Naive thymus-derived CD4-positive, alpha-beta T cell (primary cell): ENCODE measurements at regions of chr17 and their contacts with region 1.

Region 1: GRCh38 chr17:43170766-43171585 is at the start of gene NBR1:
- DNase-seq: peak; percentile 78 to 98 (median 97)
- ATAC-seq: peak; percentile 85
- H3K4me3 ChIP-seq: peak within 1 kb of the TSS; percentile 64
- H3K4me3 Mint-ChIP-seq: no peak within 1 kb of the TSS
- H3K27ac ChIP-seq: peak within 1 kb of the TSS; percentile 97
- H3K27ac Mint-ChIP-seq: no peak within 1 kb of the TSS
- H3K4me1 ChIP-seq: peaks cover 30 to 33% of the 10 kb centered on the region in 2 donors
- H3K4me1 Mint-ChIP-seq: peaks cover 21 to 46% (median 32%) of the 10 kb centered on the region in 7 donors
- H3K27me3 ChIP-seq: no peaks in the 10 kb centered on the region
- H3K27me3 Mint-ChIP-seq: no peaks in the 10 kb centered on the region
- total RNA-seq, gene NBR1: 44.6 to 83.0 (median 64.3) TPM

Region 2: DNA sequence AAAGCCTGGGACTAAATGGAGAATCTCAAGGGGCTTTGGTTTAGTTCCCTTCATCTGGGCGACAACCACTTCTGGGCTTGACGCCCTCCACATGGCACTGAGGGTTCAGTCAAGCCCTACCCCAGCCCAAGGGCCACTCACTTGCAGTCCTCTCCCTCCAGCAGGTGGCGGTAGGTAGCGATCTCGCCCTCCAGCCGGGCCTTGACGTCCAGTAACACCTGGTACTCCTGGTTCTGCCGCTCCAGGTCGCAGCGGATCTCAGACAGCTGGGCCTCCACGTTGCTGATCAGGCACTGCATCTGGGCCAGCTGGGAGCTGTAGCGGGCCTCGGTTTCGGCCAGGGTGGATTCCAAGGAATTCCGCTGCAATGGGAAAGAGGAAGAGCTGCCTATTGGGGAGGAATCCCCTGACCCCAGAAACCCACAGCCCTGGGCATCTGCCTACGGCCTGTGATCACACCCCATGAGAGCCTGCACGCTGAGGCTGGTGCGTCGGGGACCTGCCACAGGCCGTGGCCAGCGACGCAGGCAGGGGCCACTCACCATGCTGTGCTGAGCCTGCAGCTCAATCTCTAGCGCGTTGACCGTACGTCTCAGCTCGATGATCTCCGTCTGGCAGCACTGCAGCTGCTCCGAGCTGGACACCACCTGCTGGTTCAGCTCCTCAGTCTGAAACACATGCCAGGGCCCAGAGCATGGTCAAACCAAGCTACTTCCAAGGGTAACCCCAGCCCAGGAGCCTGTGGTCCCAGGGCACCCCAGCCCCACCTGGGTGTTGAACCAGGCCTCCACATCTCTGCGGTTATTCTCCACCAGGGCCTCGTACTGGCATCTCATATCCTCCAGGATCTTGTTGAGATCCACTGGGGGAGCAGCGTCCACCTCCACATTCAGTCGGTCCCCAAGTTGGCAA is 1683.9 kb before region 1 on chr17:
- CTCF ChIA-PET with region 1: no interaction called
- POLR2A ChIA-PET with region 1: no interaction called
- intact Hi-C with region 1: no loop called
- DNase-seq: peak in 1 of 9 donors; percentile 58
- ATAC-seq: no peak
- H3K4me3 ChIP-seq: no peak overlapping the region
- H3K4me3 Mint-ChIP-seq: no peak overlapping the region
- H3K27ac ChIP-seq: no peak overlapping the region
- H3K27ac Mint-ChIP-seq: no peak overlapping the region
- H3K4me1 ChIP-seq: peaks cover 5% of the 10 kb centered on the region in 2 donors
- H3K4me1 Mint-ChIP-seq: peaks cover 0 to 12% (median 11%) of the 10 kb centered on the region in 7 donors
- H3K27me3 ChIP-seq: no peaks in the 10 kb centered on the region
- H3K27me3 Mint-ChIP-seq: peaks cover 0 to 2% (median 0%) of the 10 kb centered on the region in 5 donors

Region 3: GRCh38 chr17:42819944-42820535 is 350.9 kb before region 1 on chr17:
- CTCF ChIA-PET with region 1: no interaction called
- POLR2A ChIA-PET with region 1: no interaction called
- intact Hi-C with region 1: loop called in 1 of 2 experiments (anchors 1 kb)
- DNase-seq: peak; percentile 16 to 57 (median 34)
- ATAC-seq: no peak
- H3K4me3 ChIP-seq: no peak overlapping the region
- H3K4me3 Mint-ChIP-seq: peak overlapping the region in 2 of 10 donors; percentile 1 to 22
- H3K27ac ChIP-seq: peak overlapping the region; percentile 40
- H3K27ac Mint-ChIP-seq: peak overlapping the region in 4 of 9 donors; percentile 6 to 43 (median 27)
- H3K4me1 ChIP-seq: peaks cover 6 to 12% of the 10 kb centered on the region in 2 donors
- H3K4me1 Mint-ChIP-seq: peaks cover 19 to 42% (median 28%) of the 10 kb centered on the region in 7 donors
- H3K27me3 ChIP-seq: no peaks in the 10 kb centered on the region
- H3K27me3 Mint-ChIP-seq: no peaks in the 10 kb centered on the region

Region 4: DNA sequence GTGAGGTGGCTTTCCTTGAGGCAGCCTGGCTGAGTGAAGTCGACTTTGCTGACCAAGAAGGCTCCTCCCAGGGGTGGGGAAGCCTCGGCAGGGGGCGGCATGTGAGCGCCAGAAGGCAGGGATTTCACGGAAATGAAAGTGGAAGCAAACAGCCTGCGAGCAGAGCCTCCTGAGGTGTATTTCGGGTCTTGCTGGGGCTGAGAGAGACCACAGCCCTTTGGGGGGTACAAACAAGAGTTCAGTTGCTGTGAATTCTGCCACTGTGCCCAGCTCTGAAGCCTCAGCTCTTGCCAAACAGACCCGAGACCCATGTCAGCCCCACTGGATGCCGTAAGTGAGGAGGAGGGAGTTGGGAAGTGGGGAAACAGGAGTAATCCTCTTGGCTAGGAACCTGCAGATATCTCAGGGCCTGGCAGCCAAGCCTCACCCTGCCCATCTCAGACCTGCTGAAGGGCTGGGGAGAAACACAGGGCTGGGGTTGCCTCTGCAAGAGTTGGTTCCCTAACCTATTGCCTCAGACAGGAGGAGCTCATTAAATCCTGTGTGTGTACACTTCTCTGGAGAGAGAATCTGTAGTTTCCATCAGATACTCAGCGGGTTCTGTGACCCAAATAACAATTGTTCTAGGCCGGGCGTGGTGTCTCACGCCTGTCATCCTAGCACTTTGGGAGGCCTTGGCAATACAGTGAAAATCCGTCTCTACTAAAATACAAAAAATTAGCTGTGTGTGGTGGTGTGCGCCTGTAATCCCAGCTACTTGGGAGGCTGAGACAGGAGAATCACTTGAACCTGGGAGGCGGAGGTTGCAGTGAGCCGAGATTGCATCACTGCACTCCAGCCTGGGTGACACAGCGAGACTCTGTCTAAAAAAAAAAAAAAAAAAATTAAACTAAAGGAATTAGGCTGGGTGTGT is 164.1 kb before region 1 on chr17 and contains the start of gene IFI35:
- CTCF ChIA-PET with region 1: interaction called, 7 read pairs
- POLR2A ChIA-PET with region 1: interaction called, 4 read pairs
- intact Hi-C with region 1: loop called (anchors 1 to 2 kb)
- DNase-seq: peak; percentile 63 to 85 (median 82)
- ATAC-seq: peak; percentile 99
- H3K4me3 ChIP-seq: peak within 1 kb of the TSS; percentile 97
- H3K4me3 Mint-ChIP-seq: peak within 1 kb of the TSS; percentile 86 to 100 (median 100)
- H3K27ac ChIP-seq: peak within 1 kb of the TSS; percentile 99
- H3K27ac Mint-ChIP-seq: peak within 1 kb of the TSS; percentile 94 to 100 (median 100)
- H3K4me1 ChIP-seq: no peaks in the 10 kb centered on the region
- H3K4me1 Mint-ChIP-seq: peaks cover 6 to 25% (median 24%) of the 10 kb centered on the region in 7 donors
- H3K27me3 ChIP-seq: no peaks in the 10 kb centered on the region
- H3K27me3 Mint-ChIP-seq: no peaks in the 10 kb centered on the region
- total RNA-seq, gene IFI35: 23.5 to 145 (median 32.1) TPM

Region 5: DNA sequence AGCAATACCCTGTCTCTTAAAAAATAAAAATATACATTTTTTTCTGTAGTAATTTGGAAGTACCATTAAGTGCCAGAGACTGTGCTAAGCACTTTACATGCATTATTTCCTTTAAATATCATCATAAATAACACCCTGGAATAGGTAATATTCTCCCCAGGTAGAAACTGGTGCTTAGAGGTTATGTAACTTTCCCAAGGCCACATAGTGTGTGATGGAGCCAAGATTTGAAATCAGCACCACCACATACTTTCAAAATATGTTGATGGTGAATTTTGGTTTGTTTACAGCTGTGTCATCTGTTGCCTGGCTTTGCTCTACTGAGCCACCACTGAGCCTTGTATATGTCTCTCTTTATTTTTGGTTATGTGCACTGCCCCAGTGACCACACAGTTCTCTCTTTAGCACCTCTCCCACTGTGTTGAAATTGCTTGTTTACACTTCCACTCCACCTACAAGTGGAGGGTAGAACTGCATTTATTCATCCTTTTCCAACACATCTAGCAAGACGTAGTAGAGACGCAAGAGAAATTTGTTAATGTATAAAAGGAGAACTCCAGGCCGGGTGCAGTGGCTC is 19.0 kb before region 1 on chr17:
- CTCF ChIA-PET with region 1: no interaction called
- POLR2A ChIA-PET with region 1: no interaction called
- intact Hi-C with region 1: no loop called
- DNase-seq: no peak
- ATAC-seq: no peak
- H3K4me3 ChIP-seq: no peak overlapping the region
- H3K4me3 Mint-ChIP-seq: no peak overlapping the region
- H3K27ac ChIP-seq: no peak overlapping the region
- H3K27ac Mint-ChIP-seq: no peak overlapping the region
- H3K4me1 ChIP-seq: no peaks in the 10 kb centered on the region
- H3K4me1 Mint-ChIP-seq: no peaks in the 10 kb centered on the region
- H3K27me3 ChIP-seq: no peaks in the 10 kb centered on the region
- H3K27me3 Mint-ChIP-seq: no peaks in the 10 kb centered on the region

Region 6: GRCh38 chr17:43183921-43184320 is 12.9 kb after region 1 on chr17:
- CTCF ChIA-PET with region 1: interaction called, 7 read pairs
- POLR2A ChIA-PET with region 1: interaction called, 14 read pairs
- intact Hi-C with region 1: no loop called
- DNase-seq: no peak
- ATAC-seq: no peak
- H3K4me3 ChIP-seq: no peak overlapping the region
- H3K4me3 Mint-ChIP-seq: peak overlapping the region in 1 of 10 donors; percentile 7
- H3K27ac ChIP-seq: no peak overlapping the region
- H3K27ac Mint-ChIP-seq: peak overlapping the region in 1 of 9 donors; percentile 9
- H3K4me1 ChIP-seq: no peaks in the 10 kb centered on the region
- H3K4me1 Mint-ChIP-seq: peaks cover 0 to 5% (median 0%) of the 10 kb centered on the region in 7 donors
- H3K27me3 ChIP-seq: no peaks in the 10 kb centered on the region
- H3K27me3 Mint-ChIP-seq: no peaks in the 10 kb centered on the region

Region 7: GRCh38 chr17:43330876-43331639 is 160.1 kb after region 1 on chr17:
- CTCF ChIA-PET with region 1: interaction called, 5 read pairs
- POLR2A ChIA-PET with region 1: interaction called, 6 read pairs
- intact Hi-C with region 1: loop called in 1 of 2 experiments (anchors 1 kb)
- DNase-seq: no peak
- ATAC-seq: no peak
- H3K4me3 ChIP-seq: no peak overlapping the region
- H3K4me3 Mint-ChIP-seq: no peak overlapping the region
- H3K27ac ChIP-seq: no peak overlapping the region
- H3K27ac Mint-ChIP-seq: peak overlapping the region in 1 of 9 donors; percentile 41
- H3K4me1 ChIP-seq: peaks cover 4 to 5% of the 10 kb centered on the region in 2 donors
- H3K4me1 Mint-ChIP-seq: peaks cover 7 to 12% (median 9%) of the 10 kb centered on the region in 7 donors
- H3K27me3 ChIP-seq: no peaks in the 10 kb centered on the region
- H3K27me3 Mint-ChIP-seq: peaks cover 0 to 30% (median 16%) of the 10 kb centered on the region in 5 donors

Region 8: GRCh38 chr17:43388359-43389045 is 217.5 kb after region 1 on chr17:
- CTCF ChIA-PET with region 1: no interaction called
- POLR2A ChIA-PET with region 1: interaction called, 3 read pairs
- intact Hi-C with region 1: loop called in 1 of 2 experiments (anchors 1 kb)
- DNase-seq: peak; percentile 92 to 98 (median 95)
- ATAC-seq: peak; percentile 84
- H3K4me3 ChIP-seq: peak overlapping the region; percentile 94
- H3K4me3 Mint-ChIP-seq: peak overlapping the region; percentile 91 to 99 (median 96)
- H3K27ac ChIP-seq: peak overlapping the region; percentile 95
- H3K27ac Mint-ChIP-seq: peak overlapping the region; percentile 95 to 100 (median 98)
- H3K4me1 ChIP-seq: peaks cover 4 to 15% of the 10 kb centered on the region in 2 donors
- H3K4me1 Mint-ChIP-seq: peaks cover 16 to 39% (median 31%) of the 10 kb centered on the region in 7 donors
- H3K27me3 ChIP-seq: no peaks in the 10 kb centered on the region
- H3K27me3 Mint-ChIP-seq: no peaks in the 10 kb centered on the region

Region 9: GRCh38 chr17:43645765-43646481 is 474.9 kb after region 1 on chr17:
- CTCF ChIA-PET with region 1: no interaction called
- POLR2A ChIA-PET with region 1: no interaction called
- intact Hi-C with region 1: no loop called
- DNase-seq: peak in 3 of 9 donors; percentile 11 to 30 (median 18)
- ATAC-seq: peak; percentile 72
- H3K4me3 ChIP-seq: no peak overlapping the region
- H3K4me3 Mint-ChIP-seq: peak overlapping the region in 9 of 10 donors; percentile 27 to 76 (median 69)
- H3K27ac ChIP-seq: peak overlapping the region; percentile 30
- H3K27ac Mint-ChIP-seq: peak overlapping the region in 1 of 9 donors; percentile 8
- H3K4me1 ChIP-seq: no peaks in the 10 kb centered on the region
- H3K4me1 Mint-ChIP-seq: peaks cover 0 to 29% (median 10%) of the 10 kb centered on the region in 7 donors
- H3K27me3 ChIP-seq: no peaks in the 10 kb centered on the region
- H3K27me3 Mint-ChIP-seq: peaks cover 14 to 47% (median 28%) of the 10 kb centered on the region in 5 donors